ENCODE measurements at regions of chr1 and their contacts with region 1.

Region 1: DNA sequence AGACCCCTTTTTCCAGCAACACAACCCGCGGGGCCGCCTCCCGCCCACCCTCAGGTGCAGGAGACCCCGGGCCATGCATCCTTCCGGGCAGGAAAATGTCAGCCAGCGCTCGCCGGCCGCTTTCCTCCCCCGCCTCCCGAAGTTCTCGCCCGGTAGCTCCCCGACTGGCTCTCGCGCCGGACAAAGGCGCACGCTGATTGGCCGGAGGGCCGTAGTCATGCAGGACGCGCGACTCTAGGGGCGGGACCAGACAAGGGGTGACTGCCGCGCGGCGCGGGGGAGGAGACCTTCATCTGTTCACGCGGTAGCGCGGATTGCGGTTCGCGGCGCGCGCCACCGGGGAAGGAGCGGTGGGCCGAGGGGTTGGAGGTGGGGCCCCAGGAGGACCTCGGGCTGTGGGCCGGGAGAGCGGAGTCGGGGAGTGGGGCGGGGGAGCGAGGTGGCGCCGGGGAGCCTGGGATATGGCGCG is at the start of gene FLVCR1:
- DNase-seq: peak; percentile 98
- H3K4me3 ChIP-seq: peak within 1 kb of the TSS; percentile 81 to 98 (median 92)
- H3K27ac ChIP-seq: peak within 1 kb of the TSS; percentile 88 to 93 (median 92)
- H3K4me1 ChIP-seq: peaks cover 0 to 39% (median 30%) of the 10 kb centered on the region in 4 donors
- H3K27me3 ChIP-seq: no peaks in the 10 kb centered on the region
- CTCF ChIP-seq: no peak
- EP300 ChIP-seq: no peak
- POLR2A ChIP-seq: peak; percentile 31 to 64
- total RNA-seq, gene FLVCR1: 2.9 to 6.9 (median 5.1) TPM

Region 2: DNA sequence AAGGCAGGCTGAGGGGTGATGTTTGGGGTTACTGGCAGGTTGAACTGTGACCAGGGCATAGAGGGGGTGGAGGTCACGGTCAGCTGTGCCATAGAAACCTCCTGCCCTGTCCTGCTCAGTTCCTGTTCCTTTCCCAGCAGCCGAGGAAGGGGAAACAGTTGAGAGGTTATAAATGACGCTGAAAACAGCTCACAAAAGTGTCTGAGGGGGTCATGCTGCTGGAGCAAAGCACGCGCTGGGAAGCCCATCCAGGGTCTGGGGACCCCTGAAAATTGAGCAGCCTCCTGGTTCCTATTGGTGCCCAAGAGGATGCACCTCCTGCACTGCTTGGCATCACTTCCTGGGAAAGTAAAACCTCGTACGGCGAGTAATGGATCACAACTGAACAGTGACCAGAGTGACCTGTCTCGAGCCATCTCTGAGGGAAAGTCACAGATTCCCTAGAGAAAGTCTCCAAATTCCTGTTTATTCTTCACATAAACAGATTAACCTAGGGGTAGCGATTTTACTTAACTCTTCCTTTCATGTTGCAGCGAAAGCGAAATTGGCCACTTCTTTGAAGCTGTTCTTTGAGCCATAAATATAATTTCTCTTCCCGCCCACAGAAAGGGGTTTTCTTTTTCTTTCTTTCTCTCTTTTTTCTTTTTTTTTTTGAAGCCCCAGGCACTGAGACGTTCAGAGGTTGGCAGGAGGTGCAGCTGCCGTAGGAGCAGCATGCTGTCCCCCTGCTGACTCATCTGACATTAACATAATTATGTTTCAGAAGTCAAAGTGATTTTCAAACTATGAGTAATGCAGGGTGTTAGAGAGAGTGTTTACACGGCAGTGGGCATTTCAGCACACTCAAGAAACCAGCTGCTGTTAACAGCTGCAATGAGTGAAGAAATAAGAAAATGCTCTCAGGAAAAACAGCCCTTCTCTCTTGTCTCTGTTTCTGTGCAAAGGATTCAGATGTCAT is 291.2 kb before region 1 on chr1:
- intact Hi-C with region 1: loop called (anchors 10 kb)
- DNase-seq: peak; percentile 66
- H3K4me3 ChIP-seq: peak overlapping the region; percentile 28 to 56 (median 52)
- H3K27ac ChIP-seq: peak overlapping the region; percentile 73 to 81 (median 78)
- H3K4me1 ChIP-seq: peaks cover 0 to 15% (median 11%) of the 10 kb centered on the region in 4 donors
- H3K27me3 ChIP-seq: no peaks in the 10 kb centered on the region
- CTCF ChIP-seq: no peak
- EP300 ChIP-seq: no peak
- POLR2A ChIP-seq: peak in 1 of 2 donors; percentile 13